ENCODE measurements at regions of chr3 and their contacts with region 1.

Region 1: GRCh38 chr3:136196401-136197158 is 445 bp upstream of the MSL2 start:
- DNase-seq: peak; percentile 95
- ATAC-seq: peak; percentile 75
- H3K4me3 Mint-ChIP-seq: peak overlapping the region; percentile 99
- H3K27ac Mint-ChIP-seq: peak overlapping the region; percentile 94
- H3K4me1 Mint-ChIP-seq: peaks cover 47% of the 10 kb centered on the region
- H3K27me3 Mint-ChIP-seq: no peaks in the 10 kb centered on the region
- CTCF ChIP-seq: no peak

Region 2: DNA sequence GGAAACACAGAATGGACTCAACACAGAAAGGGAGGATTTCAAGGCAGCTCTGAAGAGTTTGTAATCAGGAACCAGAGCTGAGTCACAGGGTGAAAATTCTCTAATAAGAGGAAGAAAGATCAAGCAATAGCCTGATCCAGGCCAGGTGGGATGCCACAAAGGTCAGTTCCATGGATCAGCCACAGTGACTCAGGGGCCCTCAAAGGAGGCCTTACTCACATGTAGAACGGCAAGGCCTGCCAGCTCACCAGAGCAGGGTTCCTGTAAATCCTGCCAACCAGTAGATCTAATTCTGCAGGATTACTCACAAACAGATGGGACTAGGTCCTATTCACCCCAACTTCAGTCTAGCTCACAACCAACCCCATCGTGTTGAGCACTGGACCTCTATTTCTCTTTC is 309.4 kb before region 1 on chr3:
- CTCF ChIA-PET with region 1: no interaction called
- POLR2A ChIA-PET with region 1: no interaction called
- intact Hi-C with region 1: no loop called
- DNase-seq: no peak
- ATAC-seq: no peak
- H3K4me3 Mint-ChIP-seq: no peak overlapping the region
- H3K27ac Mint-ChIP-seq: no peak overlapping the region
- H3K4me1 Mint-ChIP-seq: no peaks in the 10 kb centered on the region
- H3K27me3 Mint-ChIP-seq: no peaks in the 10 kb centered on the region
- CTCF ChIP-seq: no peak

Region 3: GRCh38 chr3:136152176-136152843 is 44.3 kb before region 1 on chr3:
- CTCF ChIA-PET with region 1: no interaction called
- POLR2A ChIA-PET with region 1: interaction called, 4 read pairs
- intact Hi-C with region 1: loop called (anchors 2 kb)
- DNase-seq: no peak
- ATAC-seq: no peak
- H3K4me3 Mint-ChIP-seq: no peak overlapping the region
- H3K27ac Mint-ChIP-seq: no peak overlapping the region
- H3K4me1 Mint-ChIP-seq: peaks cover 43% of the 10 kb centered on the region
- H3K27me3 Mint-ChIP-seq: no peaks in the 10 kb centered on the region
- CTCF ChIP-seq: no peak

Region 4: GRCh38 chr3:136186344-136186743 is 10.2 kb before region 1 on chr3:
- CTCF ChIA-PET with region 1: no interaction called
- POLR2A ChIA-PET with region 1: interaction called, 57 read pairs
- intact Hi-C with region 1: loop called (anchors 1 kb)
- DNase-seq: no peak
- ATAC-seq: peak; percentile 67
- H3K4me3 Mint-ChIP-seq: peak overlapping the region; percentile 3
- H3K27ac Mint-ChIP-seq: peak overlapping the region; percentile 27
- H3K4me1 Mint-ChIP-seq: peaks cover 88% of the 10 kb centered on the region
- H3K27me3 Mint-ChIP-seq: no peaks in the 10 kb centered on the region
- CTCF ChIP-seq: no peak

Region 5: DNA sequence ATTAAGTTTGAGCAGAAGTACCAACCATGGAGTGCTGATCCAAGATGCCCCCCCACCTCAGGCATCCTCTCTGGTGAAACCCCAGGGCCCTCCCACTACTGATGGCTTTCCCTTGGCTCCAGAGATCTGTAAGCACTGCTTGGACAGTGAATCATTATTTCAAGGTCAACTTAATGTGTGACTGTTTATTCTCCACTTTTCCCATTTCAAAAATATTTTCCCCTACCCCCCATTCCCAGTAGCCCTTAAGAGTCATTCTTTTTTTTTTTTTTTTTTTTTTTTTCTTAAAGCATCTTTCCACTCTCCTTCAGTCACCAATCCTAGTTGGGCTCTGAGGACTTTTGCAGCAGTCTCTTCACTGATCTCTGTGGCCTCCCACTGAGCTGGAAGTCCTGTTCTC is 136.2 kb after region 1 on chr3:
- CTCF ChIA-PET with region 1: no interaction called
- POLR2A ChIA-PET with region 1: no interaction called
- intact Hi-C with region 1: loop called (anchors 5 kb)
- DNase-seq: no peak
- ATAC-seq: no peak
- H3K4me3 Mint-ChIP-seq: no peak overlapping the region
- H3K27ac Mint-ChIP-seq: no peak overlapping the region
- H3K4me1 Mint-ChIP-seq: no peaks in the 10 kb centered on the region
- H3K27me3 Mint-ChIP-seq: no peaks in the 10 kb centered on the region
- CTCF ChIP-seq: no peak

Region 6: GRCh38 chr3:136861890-136862616 is 665.5 kb after region 1 on chr3 and contains the start of gene NCK1:
- CTCF ChIA-PET with region 1: no interaction called
- POLR2A ChIA-PET with region 1: interaction called, 56 read pairs
- intact Hi-C with region 1: loop called (anchors 1 kb)
- DNase-seq: peak; percentile 92
- ATAC-seq: peak; percentile 94
- H3K4me3 Mint-ChIP-seq: peak within 1 kb of the TSS; percentile 93
- H3K27ac Mint-ChIP-seq: peak within 1 kb of the TSS; percentile 95
- H3K4me1 Mint-ChIP-seq: peaks cover 43% of the 10 kb centered on the region
- H3K27me3 Mint-ChIP-seq: no peaks in the 10 kb centered on the region
- CTCF ChIP-seq: no peak
- total RNA-seq, gene NCK1: 29.7 and 30.8 TPM in 2 replicates

Region 7: GRCh38 chr3:136955813-136956212 is 759.2 kb after region 1 on chr3:
- CTCF ChIA-PET with region 1: no interaction called
- POLR2A ChIA-PET with region 1: no interaction called
- intact Hi-C with region 1: no loop called
- DNase-seq: no peak
- ATAC-seq: no peak
- H3K4me3 Mint-ChIP-seq: no peak overlapping the region
- H3K27ac Mint-ChIP-seq: no peak overlapping the region
- H3K4me1 Mint-ChIP-seq: peaks cover 20% of the 10 kb centered on the region
- H3K27me3 Mint-ChIP-seq: no peaks in the 10 kb centered on the region
- CTCF ChIP-seq: no peak

Measured in activated B cell treated with CpG ODN at 0.5 μM for 24 hours (primary cell).